Spleen (tissue), 13 donors: ENCODE measurements at regions of chr19 and their contacts with region 1.

Region 1: DNA sequence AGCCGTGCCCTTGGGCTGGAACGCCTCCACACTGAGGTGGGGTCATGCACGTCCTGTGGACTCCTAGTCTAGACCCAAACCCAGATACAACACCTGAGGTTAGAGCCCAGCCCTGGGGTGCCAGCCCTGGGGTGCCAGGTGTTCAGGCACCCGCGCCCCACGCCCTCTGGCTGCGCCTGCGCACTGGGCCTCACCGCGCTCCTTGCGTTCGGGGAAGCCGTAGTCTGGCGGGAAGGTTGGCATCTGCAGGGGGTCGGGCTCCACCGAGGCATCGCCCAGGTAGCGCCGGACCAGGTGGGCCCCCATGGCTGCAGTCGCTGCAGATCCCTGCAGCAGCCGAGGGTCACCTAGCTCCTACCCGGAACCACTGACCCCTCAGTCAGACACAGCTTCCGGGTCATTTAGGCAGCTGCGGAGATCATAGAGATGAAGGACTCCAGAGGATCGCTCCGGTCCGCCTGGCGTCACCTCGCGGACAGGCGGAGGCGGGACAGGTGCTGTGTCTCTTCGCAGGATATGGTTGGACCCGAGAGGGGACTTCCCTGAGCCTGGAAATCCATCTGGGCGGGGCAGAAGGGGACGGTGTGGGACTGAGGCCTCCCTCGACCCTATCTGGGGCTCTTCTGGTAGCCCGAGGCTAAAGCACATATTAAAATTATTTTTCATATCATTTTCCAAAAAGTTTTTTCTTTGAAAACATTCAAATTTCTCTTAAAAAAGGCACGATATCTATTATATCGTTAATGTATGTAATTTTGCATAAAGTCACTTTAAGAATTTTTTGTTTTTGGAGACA is at the start of gene NDUFB7:
- DNase-seq: peak; percentile 98
- H3K4me3 ChIP-seq: peak within 1 kb of the TSS; percentile 59 to 100 (median 98)
- H3K27ac ChIP-seq: peak within 1 kb of the TSS; percentile 55 to 92 (median 89)
- H3K4me1 ChIP-seq: peaks cover 24 to 93% (median 49%) of the 10 kb centered on the region in 6 donors
- H3K27me3 ChIP-seq: no peaks in the 10 kb centered on the region
- CTCF ChIP-seq: peak; percentile 41 to 87 (median 76)
- POLR2A ChIP-seq: no peak
- total RNA-seq, gene NDUFB7: 77.2 to 185 (median 92.3) TPM

Region 2: DNA sequence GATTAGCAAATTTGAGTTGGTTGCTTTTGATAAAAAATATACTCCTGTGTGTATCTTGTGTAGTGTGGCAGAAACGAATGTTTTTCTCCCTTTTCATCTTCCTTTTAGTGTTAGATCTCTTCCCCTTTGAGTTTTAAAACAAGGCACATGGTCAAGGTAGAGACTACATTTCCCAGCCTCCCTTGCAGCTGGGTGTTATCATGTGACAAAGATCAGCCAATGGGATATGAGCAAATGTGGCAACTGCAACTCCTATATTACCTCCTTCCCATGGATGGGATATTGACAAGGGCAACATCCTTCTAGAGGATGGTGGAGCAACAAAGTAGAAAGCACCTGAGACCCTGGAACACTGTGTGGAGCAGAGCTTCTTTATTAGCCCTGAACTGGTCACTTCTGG is 60.4 kb after region 1 on chr19:
- intact Hi-C with region 1: no loop called
- DNase-seq: no peak
- H3K4me3 ChIP-seq: no peak overlapping the region
- H3K27ac ChIP-seq: no peak overlapping the region
- H3K4me1 ChIP-seq: no peaks in the 10 kb centered on the region
- H3K27me3 ChIP-seq: no peaks in the 10 kb centered on the region
- CTCF ChIP-seq: no peak
- POLR2A ChIP-seq: no peak

Region 3: DNA sequence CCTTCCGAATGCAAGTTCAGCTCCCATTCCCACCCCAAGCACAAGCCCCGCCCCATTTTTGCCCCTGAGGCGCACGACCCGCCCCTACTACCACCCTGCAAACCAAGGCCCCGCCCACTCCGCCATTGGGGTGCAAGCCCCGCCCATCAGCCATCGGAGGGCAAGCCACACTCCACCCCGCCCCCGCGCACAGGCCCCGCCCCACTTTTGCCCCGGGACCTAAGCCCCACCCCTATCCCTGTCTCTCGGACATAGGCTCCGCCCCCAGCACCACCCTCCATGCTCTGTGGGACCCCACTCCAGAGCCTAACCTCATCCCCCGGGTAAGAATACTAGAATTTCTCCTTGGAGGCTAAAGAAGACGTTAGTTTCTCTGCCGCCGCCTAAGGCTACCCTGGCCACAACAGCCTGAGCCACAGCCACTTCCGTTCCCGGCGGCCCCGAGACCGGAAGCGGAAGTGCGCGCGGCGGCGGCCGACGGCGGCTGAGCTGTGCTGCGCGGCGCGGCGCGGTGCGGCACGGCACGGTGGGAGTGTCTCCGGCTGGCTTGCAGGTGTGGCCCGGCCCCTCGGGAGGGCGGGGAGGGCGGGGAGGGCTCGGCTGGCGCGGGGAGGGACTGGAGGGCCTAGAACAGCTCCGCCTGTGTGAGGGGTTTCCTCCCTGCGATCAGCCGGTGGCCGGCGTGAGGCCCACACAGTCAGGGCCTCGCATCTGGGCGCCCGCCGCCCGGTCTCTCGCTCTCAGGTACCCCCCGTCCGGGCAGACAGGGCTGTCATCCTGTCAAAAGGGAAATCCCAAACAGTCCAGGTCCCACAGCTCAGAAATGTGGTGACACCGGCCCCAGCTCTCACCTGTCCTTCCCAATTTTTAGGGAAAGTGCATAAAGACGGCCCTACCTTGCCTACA is 118.0 kb after region 1 on chr19 and contains the start of gene ZNF333:
- intact Hi-C with region 1: loop called (anchors 5 kb)
- DNase-seq: peak; percentile 99
- H3K4me3 ChIP-seq: peak within 1 kb of the TSS; percentile 67 to 85 (median 76)
- H3K27ac ChIP-seq: peak within 1 kb of the TSS; percentile 93 to 98 (median 97)
- H3K4me1 ChIP-seq: peaks cover 6 to 68% (median 26%) of the 10 kb centered on the region in 6 donors
- H3K27me3 ChIP-seq: no peaks in the 10 kb centered on the region
- CTCF ChIP-seq: peak in 3 of 11 experiments; percentile 16 to 43 (median 26)
- POLR2A ChIP-seq: peak in 2 of 3 donors; percentile 37 to 53
- total RNA-seq, gene ZNF333: 21.7 to 43.5 (median 34.8) TPM